ENCODE measurements at regions of chr2 and their contacts with region 1.

Region 1: DNA sequence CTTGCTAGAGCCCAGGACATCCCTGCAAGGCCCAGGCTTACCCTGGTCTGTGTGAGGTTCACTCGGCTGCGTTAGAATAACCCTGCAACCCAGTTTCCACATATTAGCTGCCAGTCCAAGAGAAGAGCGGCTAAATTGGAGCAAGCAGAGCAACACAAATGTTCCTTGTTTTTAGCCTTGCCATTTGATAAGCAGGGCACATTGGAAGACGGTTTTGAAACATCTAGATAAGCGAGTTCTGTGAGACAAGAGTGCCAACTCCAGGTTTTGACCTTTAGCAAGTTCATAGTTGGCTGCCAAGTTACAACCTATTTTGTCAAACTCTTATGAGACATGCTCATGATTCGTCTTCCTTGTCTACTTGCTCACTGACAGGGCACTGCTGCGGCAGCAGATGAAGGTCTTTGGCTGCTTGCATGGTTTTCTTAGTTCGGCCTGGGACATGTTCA is 23.5 kb downstream of the DPP4 start:
- DNase-seq: no peak
- H3K4me3 ChIP-seq: no peak overlapping the region
- H3K27ac ChIP-seq: no peak overlapping the region
- H3K4me1 ChIP-seq: no peaks in the 10 kb centered on the region
- H3K27me3 ChIP-seq: no peaks in the 10 kb centered on the region
- CTCF ChIP-seq: no peak
- POLR2A ChIP-seq: no peak

Region 2: DNA sequence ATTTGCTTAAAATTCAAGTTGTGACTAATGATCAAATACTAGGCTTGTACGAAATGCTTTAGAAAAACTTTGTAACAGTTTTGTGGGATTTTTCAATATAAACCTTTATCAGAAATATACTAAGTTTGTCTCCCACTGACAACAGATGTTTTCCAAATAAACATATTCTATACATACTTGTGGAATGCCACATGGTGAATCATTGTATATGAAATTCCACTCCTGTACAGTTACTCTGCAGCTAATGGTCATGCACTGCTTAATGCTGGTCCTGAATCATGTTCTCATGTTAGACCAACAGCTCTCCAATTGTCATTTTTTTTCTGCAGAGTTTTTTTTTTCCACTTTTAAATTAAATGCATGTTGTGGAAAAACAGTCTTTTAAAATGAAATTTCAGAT is 66.7 kb before region 1 on chr2:
- CTCF ChIA-PET with region 1: no interaction called
- POLR2A ChIA-PET with region 1: no interaction called
- dilution Hi-C with region 1: no loop called
- intact Hi-C with region 1: no loop called
- DNase-seq: no peak
- H3K4me3 ChIP-seq: no peak overlapping the region
- H3K27ac ChIP-seq: no peak overlapping the region
- H3K4me1 ChIP-seq: no peaks in the 10 kb centered on the region
- H3K27me3 ChIP-seq: peaks cover 0 to 2% of the 10 kb centered on the region in 2 experiments
- CTCF ChIP-seq: no peak
- POLR2A ChIP-seq: no peak

Region 3: GRCh38 chr2:162385536-162385935 is 335.0 kb after region 1 on chr2:
- CTCF ChIA-PET with region 1: no interaction called
- POLR2A ChIA-PET with region 1: no interaction called
- dilution Hi-C with region 1: no loop called
- intact Hi-C with region 1: loop called (anchors 5 kb)
- DNase-seq: no peak
- H3K4me3 ChIP-seq: no peak overlapping the region
- H3K27ac ChIP-seq: no peak overlapping the region
- H3K4me1 ChIP-seq: no peaks in the 10 kb centered on the region
- H3K27me3 ChIP-seq: no peaks in the 10 kb centered on the region
- CTCF ChIP-seq: no peak
- POLR2A ChIP-seq: no peak

Measured in endothelial cell of umbilical vein (primary cell).